H1 (cell line): ENCODE measurements at regions of chr4 and their contacts with region 1.

Region 1: DNA sequence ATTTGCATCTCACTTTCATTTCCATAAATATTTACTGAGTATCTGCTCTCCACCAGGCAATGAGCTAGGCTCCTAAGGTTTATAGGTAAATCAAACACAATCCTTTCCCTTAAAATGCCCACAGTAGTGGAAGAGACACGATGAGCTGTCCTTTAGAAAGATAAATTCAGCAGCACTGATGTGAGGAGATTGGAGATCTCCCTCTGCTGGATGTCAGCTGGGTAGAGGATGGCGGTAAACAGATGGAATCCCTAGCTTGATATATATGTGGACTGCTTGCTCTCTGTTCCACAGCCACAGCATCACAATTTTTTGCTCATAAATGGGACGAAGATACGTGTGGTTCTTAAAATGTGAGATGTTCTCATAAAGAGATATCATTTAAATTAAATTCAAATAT is 216.4 kb upstream of the RASGEF1B start:
- DNase-seq: no peak
- H3K4me3 ChIP-seq: no peak overlapping the region
- H3K27ac ChIP-seq: no peak overlapping the region
- H3K4me1 ChIP-seq: peaks cover 0 to 5% (median 0%) of the 10 kb centered on the region in 4 experiments; a peak in 1 of 7 replicates
- H3K27me3 ChIP-seq: no peaks in the 10 kb centered on the region
- CTCF ChIP-seq: peak in 2 of 3 experiments; percentile 22 to 42; a peak in 2 of 4 replicates
- EP300 ChIP-seq: no peak
- POLR2A ChIP-seq: no peak
- RAD21 ChIP-seq: peak; percentile 63 to 65

Region 2: GRCh38 chr4:81296045-81296444 is 392.0 kb before region 1 on chr4:
- CTCF ChIA-PET with region 1: no interaction called
- POLR2A ChIA-PET with region 1: no interaction called
- DNase-seq: no peak
- H3K4me3 ChIP-seq: no peak overlapping the region
- H3K27ac ChIP-seq: no peak overlapping the region
- H3K4me1 ChIP-seq: no peaks in the 10 kb centered on the region
- H3K27me3 ChIP-seq: no peaks in the 10 kb centered on the region
- CTCF ChIP-seq: no peak
- EP300 ChIP-seq: no peak
- POLR2A ChIP-seq: no peak
- RAD21 ChIP-seq: no peak

Region 3: GRCh38 chr4:81436941-81437574 is 251.0 kb before region 1 on chr4:
- CTCF ChIA-PET with region 1: no interaction called
- POLR2A ChIA-PET with region 1: no interaction called
- DNase-seq: no peak
- H3K4me3 ChIP-seq: no peak overlapping the region
- H3K27ac ChIP-seq: no peak overlapping the region
- H3K4me1 ChIP-seq: no peaks in the 10 kb centered on the region
- H3K27me3 ChIP-seq: no peaks in the 10 kb centered on the region
- CTCF ChIP-seq: no peak
- EP300 ChIP-seq: no peak
- POLR2A ChIP-seq: no peak
- RAD21 ChIP-seq: no peak

Region 4: DNA sequence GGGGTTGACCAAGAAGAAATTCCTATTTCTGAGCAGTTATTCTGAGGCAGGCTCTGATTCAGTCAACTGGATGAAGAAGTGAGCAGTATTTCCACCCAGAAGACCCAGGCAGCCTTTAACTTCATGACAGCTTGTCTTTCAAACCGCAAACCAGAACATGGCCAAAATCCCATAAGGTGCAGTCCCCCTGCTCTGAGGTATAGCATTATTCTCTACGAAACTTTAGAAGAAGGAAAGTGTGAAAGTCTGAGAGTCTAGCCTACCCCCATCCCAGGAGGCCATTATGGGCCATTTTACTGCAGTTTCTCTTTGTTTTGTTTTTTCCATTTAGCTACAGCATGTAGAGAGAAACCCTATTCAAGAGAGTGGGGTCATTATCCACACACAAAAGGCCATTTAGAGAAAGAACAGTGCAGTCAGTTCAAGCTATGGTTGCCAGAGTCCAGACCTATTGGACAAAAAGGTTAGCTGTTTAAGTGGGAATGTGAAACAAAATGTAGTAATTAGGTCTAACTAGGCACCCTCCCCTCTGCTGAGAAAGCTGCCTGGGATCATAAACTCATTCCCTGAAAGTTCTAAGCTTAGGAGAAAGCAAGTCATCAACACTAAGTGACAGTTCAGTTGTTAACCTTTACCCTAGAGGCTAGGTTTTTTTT is 164.3 kb before region 1 on chr4:
- CTCF ChIA-PET with region 1: no interaction called
- POLR2A ChIA-PET with region 1: no interaction called
- DNase-seq: no peak
- H3K4me3 ChIP-seq: no peak overlapping the region
- H3K27ac ChIP-seq: no peak overlapping the region
- H3K4me1 ChIP-seq: peaks cover 0 to 4% (median 3%) of the 10 kb centered on the region in 4 experiments; a peak in 1 of 7 replicates
- H3K27me3 ChIP-seq: no peaks in the 10 kb centered on the region
- CTCF ChIP-seq: no peak
- EP300 ChIP-seq: no peak
- POLR2A ChIP-seq: no peak
- RAD21 ChIP-seq: no peak

Region 5: DNA sequence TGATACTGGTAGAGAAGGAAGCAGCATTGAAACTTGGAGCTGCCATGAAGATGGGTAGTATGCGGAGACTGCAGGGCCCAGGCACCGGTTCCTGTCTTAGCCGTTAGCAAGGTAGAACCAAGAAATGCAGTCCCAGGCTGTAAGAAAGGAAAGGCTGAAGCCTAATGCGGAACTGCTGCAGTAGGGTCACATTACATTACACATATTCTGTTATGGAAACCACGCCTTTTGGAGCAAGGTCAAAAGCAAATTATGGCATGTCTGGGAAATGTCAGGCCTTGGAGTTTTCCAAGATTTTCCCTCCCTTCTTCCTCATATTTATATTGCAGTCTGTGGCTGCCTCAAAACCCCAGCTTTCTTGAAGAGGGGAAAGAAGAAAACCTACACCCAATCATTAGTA is 11.5 kb before region 1 on chr4:
- CTCF ChIA-PET with region 1: interaction called, 14 read pairs
- POLR2A ChIA-PET with region 1: no interaction called
- DNase-seq: no peak
- H3K4me3 ChIP-seq: no peak overlapping the region
- H3K27ac ChIP-seq: no peak overlapping the region
- H3K4me1 ChIP-seq: no peaks in the 10 kb centered on the region
- H3K27me3 ChIP-seq: no peaks in the 10 kb centered on the region
- CTCF ChIP-seq: no peak
- EP300 ChIP-seq: no peak
- POLR2A ChIP-seq: no peak
- RAD21 ChIP-seq: no peak

Region 6: DNA sequence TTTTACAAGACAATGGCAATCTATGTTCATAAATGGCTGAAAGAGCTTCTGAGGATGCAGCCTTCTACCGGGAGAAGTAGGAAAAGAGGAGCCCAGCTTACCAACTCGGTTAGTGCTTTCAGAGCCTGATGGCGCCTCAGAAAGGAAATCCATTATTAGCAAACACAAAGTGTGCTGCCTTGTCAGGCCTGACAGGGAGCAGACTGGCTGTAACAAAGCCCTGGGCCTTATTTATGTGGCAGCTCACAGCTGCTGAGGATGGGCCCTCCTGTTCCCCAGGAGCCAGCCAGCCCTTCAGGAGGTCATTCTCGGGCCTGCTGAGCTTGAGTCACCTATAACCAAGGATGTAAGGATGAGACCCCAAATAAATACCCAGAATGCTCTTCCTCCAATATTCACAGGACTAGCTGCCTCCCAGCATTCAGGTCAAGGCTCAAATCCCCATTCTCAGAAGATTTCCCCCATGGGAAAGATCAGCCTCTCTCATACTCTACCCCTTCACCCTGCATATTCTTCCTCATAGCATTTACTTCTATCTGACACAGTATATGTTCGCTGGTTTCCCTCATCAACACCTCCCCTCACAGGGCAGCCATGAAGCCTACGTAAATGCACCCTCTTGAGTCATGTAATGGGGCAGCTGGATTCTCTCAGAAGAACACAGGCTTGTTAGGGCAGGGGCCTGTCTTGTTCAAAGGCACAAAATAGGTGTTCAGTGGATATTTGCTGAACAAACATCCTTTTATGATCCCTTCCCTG is 10.6 kb after region 1 on chr4:
- CTCF ChIA-PET with region 1: interaction called, 15 read pairs
- POLR2A ChIA-PET with region 1: no interaction called
- DNase-seq: no peak
- H3K4me3 ChIP-seq: no peak overlapping the region
- H3K27ac ChIP-seq: no peak overlapping the region
- H3K4me1 ChIP-seq: no peaks in the 10 kb centered on the region
- H3K27me3 ChIP-seq: no peaks in the 10 kb centered on the region
- CTCF ChIP-seq: no peak
- EP300 ChIP-seq: no peak
- POLR2A ChIP-seq: no peak
- RAD21 ChIP-seq: no peak